ENCODE measurements at regions of chr1 and their contacts with region 1.

Region 1: GRCh38 chr1:61654082-61654481 is 70.9 kb downstream of the TM2D1 start:
- DNase-seq: no peak
- ATAC-seq: no peak
- H3K4me3 Mint-ChIP-seq: no peak overlapping the region
- H3K27ac Mint-ChIP-seq: no peak overlapping the region
- H3K4me1 Mint-ChIP-seq: no peaks in the 10 kb centered on the region
- H3K27me3 Mint-ChIP-seq: peaks cover 6% of the 10 kb centered on the region

Region 2: GRCh38 chr1:61641578-61642336 is 12.3 kb before region 1 on chr1:
- CTCF ChIA-PET with region 1: interaction called, 12 read pairs
- POLR2A ChIA-PET with region 1: no interaction called
- DNase-seq: peak; percentile 73
- ATAC-seq: peak; percentile 98
- H3K4me3 Mint-ChIP-seq: peak overlapping the region; percentile 54
- H3K27ac Mint-ChIP-seq: no peak overlapping the region
- H3K4me1 Mint-ChIP-seq: peaks cover 11% of the 10 kb centered on the region
- H3K27me3 Mint-ChIP-seq: peaks cover 10% of the 10 kb centered on the region